Body of pancreas (tissue), 4 donors: ENCODE measurements at regions of chr19 and their contacts with region 1.

Region 1: GRCh38 chr19:17616961-17617806 is 61.7 kb downstream of the COLGALT1 start:
- DNase-seq: no peak
- ATAC-seq: peak; percentile 33
- H3K4me3 ChIP-seq: no peak overlapping the region
- H3K27ac ChIP-seq: no peak overlapping the region
- H3K4me1 ChIP-seq: no peaks in the 10 kb centered on the region
- H3K27me3 ChIP-seq: no peaks in the 10 kb centered on the region
- CTCF ChIP-seq: no peak
- POLR2A ChIP-seq: no peak

Region 2: DNA sequence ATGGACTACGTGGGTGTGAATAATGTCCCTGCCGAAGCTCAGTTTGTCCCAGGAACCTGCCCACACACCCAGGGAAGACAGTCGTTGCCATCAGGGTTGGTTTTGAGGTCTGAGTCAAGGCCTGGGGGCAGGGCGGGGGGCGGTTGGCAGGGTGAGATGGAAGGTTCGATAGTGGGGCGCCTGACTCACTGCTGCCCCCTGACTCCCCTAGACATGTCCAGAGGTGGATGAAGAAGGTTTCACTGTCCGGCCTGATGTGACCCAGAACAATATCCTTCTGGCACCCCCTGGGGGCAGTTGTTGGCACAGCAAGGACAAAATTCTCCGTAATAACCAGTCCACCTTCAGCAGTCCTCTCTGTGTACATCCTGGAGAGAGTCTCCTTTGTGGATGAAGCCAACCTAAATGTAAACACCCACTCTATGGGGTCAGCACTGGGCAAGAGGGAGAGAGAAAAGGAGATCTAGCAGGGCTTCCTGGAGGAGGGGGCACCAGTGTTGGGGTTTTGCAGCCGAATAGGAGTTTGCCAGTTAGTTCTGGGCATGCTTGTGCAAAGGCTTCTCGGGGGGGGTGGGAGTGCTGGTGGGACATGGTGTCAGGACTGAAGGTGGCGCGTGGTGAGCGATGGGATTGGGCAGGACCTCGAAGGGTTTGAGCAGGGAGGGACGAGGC is 158.2 kb after region 1 on chr19:
- intact Hi-C with region 1: loop called (anchors 10 kb)
- DNase-seq: peak in 2 of 4 donors; percentile 25 to 44
- ATAC-seq: no peak
- H3K4me3 ChIP-seq: no peak overlapping the region
- H3K27ac ChIP-seq: no peak overlapping the region
- H3K4me1 ChIP-seq: peaks cover 6% of the 10 kb centered on the region
- H3K27me3 ChIP-seq: no peaks in the 10 kb centered on the region
- CTCF ChIP-seq: peak in 6 of 7 experiments; percentile 17 to 37 (median 22)
- POLR2A ChIP-seq: no peak